PC-3 (cell line): ENCODE measurements at regions of chr10 and their contacts with region 1.

Region 1: DNA sequence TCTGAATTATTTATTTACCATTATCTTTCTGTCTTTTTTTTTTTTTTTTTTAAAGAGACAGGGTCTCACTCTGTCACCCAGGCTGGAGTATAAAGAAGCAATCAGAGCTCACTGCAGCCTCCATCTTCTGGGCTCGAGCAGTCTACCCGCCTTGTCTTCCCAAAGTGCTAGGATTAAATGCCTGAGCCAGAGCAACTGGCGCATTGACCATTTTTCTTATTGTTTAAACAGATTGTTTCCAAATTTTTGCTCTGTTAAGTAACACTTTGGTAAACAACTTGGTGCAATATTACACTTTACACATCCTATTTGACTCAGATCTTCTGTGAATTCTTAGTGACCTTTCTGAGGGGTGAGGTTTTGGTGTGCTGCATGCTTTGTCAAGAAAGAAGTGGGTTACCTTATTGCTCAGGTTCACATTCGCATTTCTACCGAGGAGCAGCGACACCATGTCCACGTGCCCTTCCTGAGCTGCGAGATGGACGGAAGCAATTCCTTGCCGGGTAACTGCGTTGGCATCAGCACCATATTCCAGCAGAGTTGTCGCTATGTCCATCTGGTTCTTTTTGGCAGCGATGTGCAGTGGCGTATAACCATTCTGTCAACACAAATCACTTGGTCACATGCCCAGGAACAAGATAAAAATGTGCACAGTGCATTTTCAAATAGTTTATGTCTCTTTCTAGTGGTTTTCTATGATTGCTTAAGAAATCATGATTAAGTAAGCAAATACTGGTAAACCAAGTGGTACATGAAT is 203.2 kb downstream of the ANK3 start:
- DNase-seq: peak; percentile 98
- ATAC-seq: peak; percentile 80
- H3K4me3 ChIP-seq: peak overlapping the region; percentile 44
- H3K27ac ChIP-seq: peak overlapping the region; percentile 86
- H3K4me1 ChIP-seq: peaks cover 42% of the 10 kb centered on the region
- H3K27me3 ChIP-seq: no peaks in the 10 kb centered on the region
- CTCF ChIP-seq: no peak

Region 2: GRCh38 chr10:60114765-60115586 is 71.5 kb before region 1 on chr10:
- CTCF ChIA-PET with region 1: interaction called, 9 read pairs
- POLR2A ChIA-PET with region 1: no interaction called
- intact Hi-C with region 1: loop called (anchors 1 kb)
- DNase-seq: peak; percentile 96
- ATAC-seq: peak; percentile 92
- H3K4me3 ChIP-seq: no peak overlapping the region
- H3K27ac ChIP-seq: no peak overlapping the region
- H3K4me1 ChIP-seq: peaks cover 7% of the 10 kb centered on the region
- H3K27me3 ChIP-seq: no peaks in the 10 kb centered on the region
- CTCF ChIP-seq: peak; percentile 99

Region 3: GRCh38 chr10:60123172-60124067 is 63.1 kb before region 1 on chr10:
- CTCF ChIA-PET with region 1: no interaction called
- POLR2A ChIA-PET with region 1: interaction called, 23 read pairs
- intact Hi-C with region 1: loop called (anchors 1 kb)
- DNase-seq: peak; percentile 99
- ATAC-seq: peak; percentile 99
- H3K4me3 ChIP-seq: peak overlapping the region; percentile 23
- H3K27ac ChIP-seq: peak overlapping the region; percentile 93
- H3K4me1 ChIP-seq: peaks cover 27% of the 10 kb centered on the region
- H3K27me3 ChIP-seq: no peaks in the 10 kb centered on the region
- CTCF ChIP-seq: no peak

Region 4: DNA sequence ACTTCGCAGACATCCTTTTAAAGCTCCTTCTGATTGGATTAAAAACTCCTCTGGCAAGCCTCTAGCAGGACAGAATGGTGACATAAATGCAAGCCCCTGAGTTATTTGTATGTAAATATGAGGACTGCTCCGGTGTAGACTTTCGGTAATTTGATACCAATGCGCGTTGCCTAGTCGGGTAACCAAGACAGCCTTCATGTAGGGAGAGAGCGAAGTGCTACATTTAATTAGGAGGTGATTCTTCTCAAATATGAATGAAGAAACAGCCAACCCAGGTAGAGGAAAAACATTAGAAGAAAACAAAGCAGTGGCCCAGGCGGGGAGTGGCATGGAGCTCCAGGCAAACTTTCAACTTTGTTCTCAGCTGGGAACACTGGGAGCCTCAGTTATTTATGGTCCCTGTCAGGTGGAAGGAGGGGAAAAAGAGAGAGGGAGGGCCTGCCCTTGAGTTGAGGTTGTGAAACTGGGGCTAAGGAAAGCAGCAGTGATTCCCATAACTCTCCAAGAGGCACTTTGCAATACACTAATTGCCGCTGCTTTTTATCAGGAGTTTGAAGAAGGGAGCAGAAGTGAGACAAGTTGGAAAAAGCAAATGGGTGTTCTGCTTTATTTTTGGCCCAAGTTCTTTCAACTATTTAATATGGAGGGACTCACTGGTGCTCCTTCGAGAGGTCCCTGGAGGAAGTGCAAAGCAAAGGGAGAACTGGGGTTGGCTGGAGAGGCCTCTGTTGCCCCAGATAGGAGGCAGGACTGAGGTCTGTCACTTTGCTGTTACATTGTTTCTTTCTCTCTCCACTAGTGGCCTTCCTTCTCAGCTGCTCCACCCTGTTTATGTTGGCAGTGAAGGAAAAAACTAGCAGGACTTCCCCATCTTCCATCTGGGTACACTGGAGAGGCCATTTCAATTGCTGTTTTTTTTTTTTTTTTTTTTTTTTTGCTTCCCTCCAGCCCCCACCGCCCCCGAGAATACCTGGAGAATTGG is 45.6 kb before region 1 on chr10:
- CTCF ChIA-PET with region 1: no interaction called
- POLR2A ChIA-PET with region 1: no interaction called
- intact Hi-C with region 1: loop called (anchors 1 kb)
- DNase-seq: peak; percentile 81
- ATAC-seq: peak; percentile 81
- H3K4me3 ChIP-seq: peak overlapping the region; percentile 59
- H3K27ac ChIP-seq: peak overlapping the region; percentile 88
- H3K4me1 ChIP-seq: peaks cover 70% of the 10 kb centered on the region
- H3K27me3 ChIP-seq: no peaks in the 10 kb centered on the region
- CTCF ChIP-seq: 0 out of 2 replicates have a peak, but pooled peaks have one; percentile 7

Region 5: DNA sequence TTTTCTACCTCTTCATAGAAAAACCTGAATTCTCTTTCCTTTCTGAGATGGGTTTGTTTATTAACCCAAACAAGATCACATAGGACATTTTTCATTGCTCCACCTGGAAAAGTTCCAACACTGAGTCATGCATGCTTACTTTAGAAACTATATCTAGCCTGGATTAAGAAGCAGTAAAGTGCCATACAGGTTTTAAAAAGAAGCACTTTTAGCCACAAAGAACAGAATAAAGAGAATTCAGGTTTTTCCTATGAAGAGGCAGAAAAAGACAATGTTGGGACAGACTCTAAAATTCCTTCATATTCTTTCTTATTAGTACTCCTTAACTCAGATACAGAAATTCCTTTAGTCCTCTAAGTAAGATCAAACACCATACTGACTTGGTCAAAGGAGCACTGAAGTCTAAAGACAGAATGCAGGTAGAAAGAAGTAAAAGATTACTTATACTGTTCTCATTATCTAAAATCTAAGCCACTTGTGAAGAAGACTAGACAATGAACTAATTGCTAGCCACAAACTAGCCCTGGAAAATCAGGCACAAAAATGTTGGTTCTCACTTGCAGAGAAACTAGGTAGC is 38.1 kb before region 1 on chr10:
- CTCF ChIA-PET with region 1: no interaction called
- POLR2A ChIA-PET with region 1: no interaction called
- intact Hi-C with region 1: loop called (anchors 1 kb)
- DNase-seq: peak; percentile 99
- ATAC-seq: peak; percentile 88
- H3K4me3 ChIP-seq: peak overlapping the region; percentile 9; the same call in 1 of the 2 replicates
- H3K27ac ChIP-seq: peak overlapping the region; percentile 72
- H3K4me1 ChIP-seq: peaks cover 27% of the 10 kb centered on the region
- H3K27me3 ChIP-seq: no peaks in the 10 kb centered on the region
- CTCF ChIP-seq: no peak

Region 6: DNA sequence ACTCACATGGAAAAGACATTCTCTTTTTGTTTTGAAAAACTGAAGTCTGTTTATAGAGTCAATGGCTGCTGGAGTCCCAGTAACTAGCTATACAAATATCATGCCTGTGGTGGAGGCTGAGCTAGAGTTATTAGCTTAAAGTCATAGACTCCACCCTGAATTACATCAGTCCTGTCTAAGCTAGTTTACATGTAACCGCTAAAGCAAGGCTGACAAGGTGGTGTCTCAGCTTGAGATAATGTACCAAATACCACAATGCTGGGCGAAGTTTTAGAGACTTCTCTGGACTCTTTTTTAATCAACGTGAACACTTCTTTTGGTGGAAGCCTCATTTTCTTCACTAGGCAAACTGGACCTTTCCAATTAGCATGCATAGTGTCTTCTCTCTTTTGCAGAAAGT is 16.2 kb before region 1 on chr10:
- CTCF ChIA-PET with region 1: interaction called, 6 read pairs
- POLR2A ChIA-PET with region 1: no interaction called
- intact Hi-C with region 1: loop called (anchors 1 kb)
- DNase-seq: peak; percentile 97
- ATAC-seq: peak; percentile 72
- H3K4me3 ChIP-seq: peak overlapping the region; percentile 55
- H3K27ac ChIP-seq: peak overlapping the region; percentile 95
- H3K4me1 ChIP-seq: peaks cover 71% of the 10 kb centered on the region
- H3K27me3 ChIP-seq: no peaks in the 10 kb centered on the region
- CTCF ChIP-seq: no peak